ENCODE measurements at regions of chr6 and their contacts with region 1.

Region 1: DNA sequence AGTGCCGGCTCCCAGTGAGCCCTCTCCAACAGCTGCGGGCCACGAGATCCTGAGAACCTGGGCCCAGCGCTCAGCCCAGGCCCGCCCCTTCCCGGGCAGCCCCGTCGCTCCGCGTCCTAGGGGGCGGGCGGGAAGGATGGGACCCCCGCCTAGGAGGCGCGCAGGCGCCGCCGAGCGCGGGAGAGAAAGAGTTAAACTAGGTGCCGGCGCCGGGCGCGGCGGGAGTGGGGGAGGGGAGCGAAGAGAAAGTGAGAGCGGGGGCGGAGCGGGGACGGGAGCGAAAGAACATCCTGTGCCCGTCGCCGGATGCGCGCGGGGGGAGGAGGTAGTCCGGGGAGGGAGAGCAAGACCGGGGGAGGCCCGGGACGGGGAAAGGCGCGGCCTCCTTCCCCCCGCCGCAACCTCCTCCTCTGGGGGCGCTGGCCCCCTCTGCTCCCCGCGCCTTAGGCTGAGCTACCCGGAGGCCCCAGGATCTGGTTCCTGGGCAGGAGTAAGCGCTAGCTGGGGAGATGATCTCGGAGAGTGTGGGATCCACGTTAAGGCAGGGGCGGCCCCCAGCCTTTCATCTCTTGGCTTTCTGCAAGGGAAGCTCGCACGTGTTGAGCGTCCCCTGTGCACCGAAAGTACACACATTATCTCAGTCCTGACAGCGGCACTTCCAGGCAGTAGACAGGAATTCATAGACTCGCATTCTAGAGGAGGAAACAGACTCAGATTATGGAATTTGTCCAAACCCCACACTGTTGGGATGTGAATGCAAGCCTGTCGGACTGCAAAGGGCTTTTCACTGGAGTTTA is 4.9 kb upstream of the ARMC12 start:
- DNase-seq: peak; percentile 55 to 59 (median 57)
- H3K4me3 ChIP-seq: peak overlapping the region; percentile 76 to 95 (median 76)
- H3K4me3 Mint-ChIP-seq: peak overlapping the region; percentile 83 to 92
- H3K27ac ChIP-seq: peak overlapping the region; percentile 91 to 92
- H3K27ac Mint-ChIP-seq: peak overlapping the region; percentile 86 to 95 (median 93)
- H3K4me1 ChIP-seq: peaks cover 53 to 71% of the 10 kb centered on the region in 2 donors
- H3K4me1 Mint-ChIP-seq: peaks cover 58% of the 10 kb centered on the region
- H3K27me3 ChIP-seq: no peaks in the 10 kb centered on the region
- H3K27me3 Mint-ChIP-seq: peaks cover 0 to 2% (median 0%) of the 10 kb centered on the region in 3 donors
- CTCF ChIP-seq: no peak

Region 2: DNA sequence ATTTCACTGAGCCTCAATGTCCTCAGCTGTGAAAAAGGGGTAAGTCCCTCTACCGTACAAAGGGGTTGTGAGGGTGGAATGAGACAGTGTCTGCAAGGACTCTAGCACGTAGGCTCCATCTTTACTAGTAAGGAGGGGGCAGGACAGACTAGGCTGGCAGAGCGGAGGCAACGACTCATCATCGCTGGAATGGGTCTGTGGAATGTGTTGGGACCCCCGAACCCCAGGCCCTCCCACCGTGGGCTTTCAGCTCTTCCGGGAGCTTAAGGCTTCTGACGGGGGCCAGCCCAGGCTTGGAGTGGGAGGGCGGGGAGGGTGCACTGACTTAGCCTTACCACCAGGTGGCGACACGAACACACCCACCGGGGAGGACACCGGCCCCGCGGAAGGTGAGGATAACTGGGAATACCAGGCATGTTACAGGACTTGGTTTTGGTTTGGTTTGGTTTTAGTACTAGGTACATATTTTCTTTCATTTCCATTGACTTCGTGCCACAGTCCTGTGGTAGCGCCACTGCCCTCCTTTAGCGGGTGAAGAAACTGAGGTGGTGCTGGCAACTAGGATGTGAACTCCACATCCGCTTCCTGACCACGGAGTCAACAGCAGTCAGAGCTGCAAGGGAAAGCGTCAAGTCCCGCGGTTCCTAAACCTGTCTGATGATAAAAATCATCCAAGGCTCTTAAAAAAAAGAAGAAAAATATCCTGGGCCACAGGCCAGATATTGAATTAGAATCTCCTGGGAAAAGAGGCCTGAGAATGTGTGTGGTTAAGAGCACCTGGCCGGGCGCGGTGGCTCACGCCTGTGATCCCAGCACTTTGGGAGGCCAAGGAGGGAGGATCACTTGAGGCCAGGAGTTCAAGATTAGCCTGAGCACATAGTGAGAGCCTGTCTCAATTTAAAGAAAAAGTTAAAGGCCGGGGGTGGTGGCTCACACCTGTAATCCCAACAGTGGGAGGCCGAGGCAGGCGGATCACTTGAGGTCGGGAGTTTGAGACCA is 209.0 kb before region 1 on chr6:
- intact Hi-C with region 1: loop called (anchors 5 kb)
- DNase-seq: peak; percentile 40 to 58 (median 49)
- H3K4me3 ChIP-seq: peak overlapping the region in 2 of 3 experiments; percentile 27 to 68
- H3K4me3 Mint-ChIP-seq: peak overlapping the region; percentile 67 to 81
- H3K27ac ChIP-seq: no peak overlapping the region
- H3K27ac Mint-ChIP-seq: no peak overlapping the region
- H3K4me1 ChIP-seq: peaks cover 0 to 4% of the 10 kb centered on the region in 2 donors
- H3K4me1 Mint-ChIP-seq: peaks cover 10% of the 10 kb centered on the region
- H3K27me3 ChIP-seq: no peaks in the 10 kb centered on the region
- H3K27me3 Mint-ChIP-seq: peaks cover 10 to 16% (median 16%) of the 10 kb centered on the region in 3 donors
- CTCF ChIP-seq: peak; percentile 99

Region 3: DNA sequence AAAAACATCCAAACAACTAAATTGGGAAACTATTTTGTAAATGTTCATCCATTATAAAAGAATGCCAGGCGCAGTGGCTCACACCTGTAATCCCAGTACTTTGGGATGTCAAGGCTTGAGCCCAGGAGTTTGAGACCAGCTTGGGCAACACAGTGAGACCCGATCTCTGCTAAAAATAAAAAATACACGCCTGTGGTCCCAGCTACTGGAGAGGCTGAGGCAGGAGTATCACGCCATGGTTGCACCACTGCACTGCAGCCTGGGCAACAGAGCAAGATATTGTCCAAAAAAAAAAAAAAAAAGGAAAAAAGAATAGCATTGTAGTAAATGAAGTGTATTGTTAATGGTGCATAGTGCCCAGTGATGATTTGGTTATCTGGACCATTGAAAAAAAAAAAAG is 81.9 kb before region 1 on chr6:
- intact Hi-C with region 1: no loop called
- DNase-seq: no peak
- H3K4me3 ChIP-seq: no peak overlapping the region
- H3K4me3 Mint-ChIP-seq: no peak overlapping the region
- H3K27ac ChIP-seq: no peak overlapping the region
- H3K27ac Mint-ChIP-seq: peak overlapping the region in 1 of 7 donors; percentile 32
- H3K4me1 ChIP-seq: no peaks in the 10 kb centered on the region
- H3K4me1 Mint-ChIP-seq: peaks cover 10% of the 10 kb centered on the region
- H3K27me3 ChIP-seq: no peaks in the 10 kb centered on the region
- H3K27me3 Mint-ChIP-seq: no peaks in the 10 kb centered on the region
- CTCF ChIP-seq: no peak

Region 4: GRCh38 chr6:35905841-35906498 is 174.0 kb after region 1 on chr6:
- intact Hi-C with region 1: no loop called
- DNase-seq: no peak
- H3K4me3 ChIP-seq: no peak overlapping the region
- H3K4me3 Mint-ChIP-seq: no peak overlapping the region
- H3K27ac ChIP-seq: no peak overlapping the region
- H3K27ac Mint-ChIP-seq: peak overlapping the region in 2 of 7 donors; percentile 7 to 25
- H3K4me1 ChIP-seq: no peaks in the 10 kb centered on the region
- H3K4me1 Mint-ChIP-seq: peaks cover 4% of the 10 kb centered on the region
- H3K27me3 ChIP-seq: no peaks in the 10 kb centered on the region
- H3K27me3 Mint-ChIP-seq: no peaks in the 10 kb centered on the region
- CTCF ChIP-seq: no peak